ENCODE measurements at regions of chr11 and their contacts with region 1.

Region 1: GRCh38 chr11:11973361-11973800 is 35.0 kb downstream of the DKK3 start:
- DNase-seq: peak; percentile 62 to 79 (median 77)
- H3K4me3 ChIP-seq: no peak overlapping the region
- H3K27ac ChIP-seq: peak overlapping the region in 1 of 2 donors; percentile 51
- H3K4me1 ChIP-seq: peaks cover 31% of the 10 kb centered on the region
- H3K27me3 ChIP-seq: no peaks in the 10 kb centered on the region
- CTCF ChIP-seq: no peak
- EP300 ChIP-seq: no peak
- POLR2A ChIP-seq: no peak

Region 2: GRCh38 chr11:12008790-12009616 is 35.6 kb after region 1 on chr11:
- intact Hi-C with region 1: loop called in 1 of 4 experiments (anchors 5 kb)
- DNase-seq: peak; percentile 20 to 67 (median 50)
- H3K4me3 ChIP-seq: peak overlapping the region; percentile 49
- H3K27ac ChIP-seq: peak overlapping the region in 1 of 2 donors; percentile 46
- H3K4me1 ChIP-seq: peaks cover 9% of the 10 kb centered on the region
- H3K27me3 ChIP-seq: no peaks in the 10 kb centered on the region
- CTCF ChIP-seq: no peak
- EP300 ChIP-seq: no peak
- POLR2A ChIP-seq: no peak

Region 3: GRCh38 chr11:12029738-12030363 is 56.5 kb after region 1 on chr11:
- intact Hi-C with region 1: no loop called
- DNase-seq: no peak
- H3K4me3 ChIP-seq: no peak overlapping the region
- H3K27ac ChIP-seq: no peak overlapping the region
- H3K4me1 ChIP-seq: no peaks in the 10 kb centered on the region
- H3K27me3 ChIP-seq: no peaks in the 10 kb centered on the region
- CTCF ChIP-seq: no peak
- EP300 ChIP-seq: no peak
- POLR2A ChIP-seq: no peak